ENCODE measurements at regions of chr9 and their contacts with region 1.

Region 1: DNA sequence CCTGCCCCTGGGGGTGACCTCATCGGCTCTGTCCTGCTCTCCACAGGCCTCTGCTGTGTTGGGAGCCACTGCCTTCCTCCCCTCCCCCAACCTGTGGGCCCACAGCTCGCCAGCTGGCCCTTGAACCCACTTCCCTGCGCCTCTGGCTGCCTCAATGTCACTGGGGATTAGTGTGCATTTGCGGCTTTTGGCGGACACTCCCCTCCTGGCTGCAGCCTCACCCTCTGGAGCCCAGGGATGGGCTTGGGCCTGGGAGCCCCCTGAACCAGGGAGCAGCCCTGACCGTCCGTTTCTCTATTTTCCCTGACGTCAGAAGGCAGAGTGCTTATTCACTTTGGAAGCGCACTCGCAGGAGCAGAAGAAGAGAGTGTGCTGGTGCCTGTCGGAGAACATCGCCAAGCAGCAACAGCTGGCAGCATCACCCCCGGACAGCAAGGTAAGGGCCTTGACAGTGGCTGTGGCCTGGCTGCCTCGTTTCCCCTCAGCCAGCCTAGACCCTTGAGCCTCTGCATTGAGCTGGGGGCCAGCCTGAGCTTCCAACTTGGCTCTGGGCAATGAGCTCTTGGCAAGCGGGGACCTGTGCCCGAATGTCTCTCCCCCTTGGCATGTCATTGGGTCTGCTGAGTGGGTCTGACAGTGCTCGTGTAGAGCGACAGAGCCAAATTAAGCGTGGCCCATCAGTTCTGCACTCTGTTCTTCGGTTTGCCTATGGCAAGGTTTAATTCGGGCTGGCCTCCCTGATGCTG is 73.1 kb downstream of the RGS3 start:
- DNase-seq: peak; percentile 85 to 99 (median 93)

Region 2: GRCh38 chr9:113564498-113565237 is 28.0 kb after region 1 on chr9:
- intact Hi-C with region 1: loop called (anchors 2 kb)
- DNase-seq: peak in 8 of 10 donors; percentile 36 to 93 (median 66)

Region 3: GRCh38 chr9:113581865-113582697 is 45.4 kb after region 1 on chr9:
- intact Hi-C with region 1: loop called (anchors 5 kb)
- DNase-seq: peak in 9 of 10 donors; percentile 52 to 97 (median 78)

Measured in posterior cingulate gyrus (tissue), 11 donors.